GM12878 (cell line): ENCODE measurements at regions of chr6 and their contacts with region 1.

Region 1: DNA sequence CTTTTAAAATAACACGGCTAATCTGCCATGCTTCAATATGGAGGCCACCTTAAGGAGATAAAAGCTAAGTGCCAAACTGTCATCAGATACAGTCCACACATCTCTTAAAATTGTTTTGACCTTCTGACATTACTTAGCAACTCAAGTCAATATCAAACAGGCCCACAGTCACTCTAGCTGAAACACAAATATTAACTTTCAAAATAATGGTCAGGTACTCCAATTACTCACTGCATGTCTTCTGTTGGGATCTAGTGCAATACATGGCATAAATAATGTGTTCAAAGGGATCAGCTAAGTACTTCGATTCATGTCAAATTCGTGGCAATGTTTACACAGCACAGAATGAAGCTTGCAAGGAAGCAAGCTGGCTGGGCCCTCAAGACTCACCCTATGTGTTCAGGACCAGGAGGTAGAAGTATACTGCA is 133.9 kb upstream of the BEND6 start:
- DNase-seq: no peak
- ATAC-seq: peak; percentile 47
- H3K4me3 ChIP-seq: no peak overlapping the region
- H3K27ac ChIP-seq: no peak overlapping the region
- H3K4me1 ChIP-seq: peaks cover 6% of the 10 kb centered on the region; the same call in 1 of the 2 replicates
- H3K27me3 ChIP-seq: no peaks in the 10 kb centered on the region
- CTCF ChIP-seq: no peak
- EP300 ChIP-seq: no peak
- POLR2A ChIP-seq: no peak
- RAD21 ChIP-seq: no peak

Region 2: DNA sequence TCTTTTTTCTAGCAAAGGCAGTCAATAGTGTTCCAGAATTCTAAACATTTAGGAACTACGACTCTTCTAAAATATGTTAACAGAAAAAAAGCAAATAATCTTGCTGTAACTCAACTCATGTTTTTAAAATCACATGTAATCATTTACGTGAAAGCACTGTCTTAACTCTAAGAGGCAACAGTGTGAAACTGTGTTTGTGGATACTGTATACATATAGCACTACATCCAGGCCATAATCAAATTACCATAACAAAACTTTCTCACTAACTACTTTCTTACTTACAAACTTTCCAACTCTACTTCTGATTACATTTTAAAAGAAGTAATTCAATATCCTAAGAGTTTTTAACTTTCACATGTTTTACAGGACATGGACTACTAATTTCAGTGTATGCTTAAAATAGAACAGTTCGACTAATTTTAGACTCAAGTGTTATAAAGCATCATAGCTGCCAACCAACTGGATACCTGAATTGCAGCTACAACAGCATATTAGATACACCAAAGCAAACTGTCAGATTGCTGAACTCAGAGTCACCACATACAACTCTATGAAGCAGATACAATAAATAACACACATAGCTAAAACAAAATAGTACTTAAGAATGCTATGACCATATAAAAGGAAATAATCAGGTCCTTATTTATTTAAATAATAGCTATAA is 12.2 kb after region 1 on chr6:
- CTCF ChIA-PET with region 1: interaction called, 10 read pairs
- POLR2A ChIA-PET with region 1: interaction called, 12 read pairs
- RAD21 ChIA-PET with region 1: interaction called, 5 read pairs
- SMC1A ChIA-PET with region 1: interaction called, 14 read pairs
- in situ Hi-C with region 1: no loop called
- intact Hi-C with region 1: no loop called
- DNase-seq: no peak
- ATAC-seq: peak; percentile 75
- H3K4me3 ChIP-seq: no peak overlapping the region
- H3K27ac ChIP-seq: no peak overlapping the region
- H3K4me1 ChIP-seq: peaks cover 21% of the 10 kb centered on the region; the same call in 1 of the 2 replicates
- H3K27me3 ChIP-seq: no peaks in the 10 kb centered on the region
- CTCF ChIP-seq: no peak
- EP300 ChIP-seq: no peak
- POLR2A ChIP-seq: no peak
- RAD21 ChIP-seq: no peak

Region 3: GRCh38 chr6:57252975-57253374 is 432.0 kb after region 1 on chr6:
- CTCF ChIA-PET with region 1: no interaction called
- POLR2A ChIA-PET with region 1: no interaction called
- RAD21 ChIA-PET with region 1: no interaction called
- SMC1A ChIA-PET with region 1: no interaction called
- in situ Hi-C with region 1: no loop called
- intact Hi-C with region 1: no loop called
- DNase-seq: no peak
- ATAC-seq: no peak
- H3K4me3 ChIP-seq: no peak overlapping the region
- H3K27ac ChIP-seq: no peak overlapping the region
- H3K4me1 ChIP-seq: no peaks in the 10 kb centered on the region
- H3K27me3 ChIP-seq: no peaks in the 10 kb centered on the region
- CTCF ChIP-seq: no peak
- EP300 ChIP-seq: no peak
- POLR2A ChIP-seq: no peak
- RAD21 ChIP-seq: no peak